Activated CD4-positive, alpha-beta T cell treated with anti-CD3 and anti-CD28 coated beads, Interleukin-2, amount 10 ng/mL, durations not matched to agents 24 days and 14 days (primary cell): ENCODE measurements at regions of chr6 and their contacts with region 1.

Region 1: GRCh38 chr6:141483598-141484061 is 649.1 kb upstream of the GJE1 start:
- DNase-seq: peak; percentile 87
- H3K4me3 Mint-ChIP-seq: peak overlapping the region; percentile 75
- H3K27ac Mint-ChIP-seq: peak overlapping the region; percentile 94
- H3K4me1 Mint-ChIP-seq: peaks cover 35% of the 10 kb centered on the region
- H3K27me3 Mint-ChIP-seq: no peaks in the 10 kb centered on the region

Region 2: DNA sequence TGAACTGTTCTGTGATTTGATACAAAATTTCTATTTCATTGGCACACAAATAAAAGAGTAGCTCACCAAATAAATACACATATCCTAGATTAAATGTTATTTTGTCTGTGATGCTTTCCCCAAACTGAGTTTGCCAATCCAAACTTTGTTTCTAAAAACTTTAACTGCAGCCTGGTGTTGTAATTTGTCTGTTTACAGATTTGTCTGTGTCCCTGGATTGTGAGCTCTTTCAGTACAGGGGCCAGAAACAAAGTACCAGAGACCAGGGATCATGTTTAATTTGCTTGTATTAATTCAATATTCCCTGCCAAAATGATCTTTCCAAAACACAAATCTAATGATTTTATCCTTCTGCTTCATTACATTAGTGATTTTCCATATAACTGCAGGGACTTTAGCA is 395.5 kb before region 1 on chr6:
- intact Hi-C with region 1: no loop called
- DNase-seq: no peak
- H3K4me3 Mint-ChIP-seq: no peak overlapping the region
- H3K27ac Mint-ChIP-seq: no peak overlapping the region
- H3K4me1 Mint-ChIP-seq: no peaks in the 10 kb centered on the region
- H3K27me3 Mint-ChIP-seq: no peaks in the 10 kb centered on the region

Region 3: DNA sequence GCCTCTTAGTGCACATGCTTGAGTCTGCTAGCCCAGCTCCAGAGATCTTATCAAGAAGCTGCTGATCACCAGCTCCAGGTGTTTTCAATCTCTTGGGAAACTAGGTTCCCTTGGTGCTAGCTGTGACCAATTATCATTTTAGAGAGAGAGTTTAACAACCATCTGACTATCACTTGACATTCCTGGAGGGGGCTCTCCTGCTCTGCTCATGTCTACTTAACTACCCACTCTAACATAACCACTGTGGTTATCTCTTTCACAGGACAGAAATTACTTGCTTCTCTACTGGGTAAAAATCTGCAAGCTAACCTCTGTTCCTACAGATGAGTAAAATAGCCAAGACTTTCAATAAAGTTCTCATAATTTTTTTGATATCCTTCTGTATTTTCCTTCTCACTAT is 174.3 kb before region 1 on chr6:
- intact Hi-C with region 1: loop called (anchors 1 kb)
- DNase-seq: no peak
- H3K4me3 Mint-ChIP-seq: no peak overlapping the region
- H3K27ac Mint-ChIP-seq: no peak overlapping the region
- H3K4me1 Mint-ChIP-seq: no peaks in the 10 kb centered on the region
- H3K27me3 Mint-ChIP-seq: no peaks in the 10 kb centered on the region

Region 4: DNA sequence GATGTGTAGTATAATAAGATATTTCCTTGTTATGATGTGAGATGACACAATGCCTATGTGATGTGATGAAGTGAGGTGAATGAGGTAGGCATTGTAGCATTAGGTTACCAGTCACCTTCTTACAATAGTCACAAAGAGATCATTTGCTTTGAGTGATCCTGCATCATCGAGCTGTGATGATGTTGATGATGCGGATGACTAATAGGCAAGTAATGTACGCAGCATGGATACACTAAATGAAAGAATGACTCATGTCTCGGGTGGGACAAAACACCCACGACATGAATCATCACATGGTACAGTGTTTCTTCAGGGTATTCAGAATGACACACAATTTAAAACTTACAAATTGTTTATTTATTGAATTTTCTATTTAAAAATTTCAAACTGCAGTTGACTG is 157.2 kb before region 1 on chr6:
- intact Hi-C with region 1: loop called (anchors 1 kb)
- DNase-seq: peak; percentile 71
- H3K4me3 Mint-ChIP-seq: no peak overlapping the region
- H3K27ac Mint-ChIP-seq: no peak overlapping the region
- H3K4me1 Mint-ChIP-seq: peaks cover 9% of the 10 kb centered on the region
- H3K27me3 Mint-ChIP-seq: peaks cover 1% of the 10 kb centered on the region

Region 5: GRCh38 chr6:141464490-141464889 is 19.1 kb before region 1 on chr6:
- intact Hi-C with region 1: loop called (anchors 1 kb)
- DNase-seq: no peak
- H3K4me3 Mint-ChIP-seq: no peak overlapping the region
- H3K27ac Mint-ChIP-seq: no peak overlapping the region
- H3K4me1 Mint-ChIP-seq: peaks cover 10% of the 10 kb centered on the region
- H3K27me3 Mint-ChIP-seq: no peaks in the 10 kb centered on the region

Region 6: DNA sequence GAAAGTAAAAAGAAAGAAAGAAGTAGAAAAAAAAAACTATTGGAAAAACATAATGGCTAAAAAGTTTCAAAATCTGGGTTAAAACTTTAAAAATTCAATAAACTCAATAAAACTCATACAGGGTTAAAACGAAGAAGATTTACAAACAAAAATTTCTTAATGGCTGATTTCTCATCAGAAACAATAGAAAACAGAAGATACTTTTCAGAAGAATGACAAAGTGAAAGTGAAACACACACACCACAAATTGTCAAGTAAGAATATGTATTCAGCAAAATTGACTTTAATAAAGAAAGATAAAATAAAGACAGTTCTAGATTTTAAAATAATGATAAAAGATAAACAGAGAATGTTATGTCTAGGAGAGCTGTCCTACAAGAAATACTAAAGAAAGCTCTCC is 30.2 kb after region 1 on chr6:
- intact Hi-C with region 1: loop called (anchors 2 kb)
- DNase-seq: no peak
- H3K4me3 Mint-ChIP-seq: peak overlapping the region; percentile 50
- H3K27ac Mint-ChIP-seq: peak overlapping the region; percentile 52
- H3K4me1 Mint-ChIP-seq: peaks cover 7% of the 10 kb centered on the region
- H3K27me3 Mint-ChIP-seq: peaks cover 4% of the 10 kb centered on the region

Region 7: GRCh38 chr6:141562851-141563763 is 79.5 kb after region 1 on chr6:
- intact Hi-C with region 1: loop called (anchors 5 kb)
- DNase-seq: peak; percentile 87
- H3K4me3 Mint-ChIP-seq: peak overlapping the region; percentile 83
- H3K27ac Mint-ChIP-seq: peak overlapping the region; percentile 35
- H3K4me1 Mint-ChIP-seq: peaks cover 19% of the 10 kb centered on the region
- H3K27me3 Mint-ChIP-seq: peaks cover 2% of the 10 kb centered on the region

Region 8: DNA sequence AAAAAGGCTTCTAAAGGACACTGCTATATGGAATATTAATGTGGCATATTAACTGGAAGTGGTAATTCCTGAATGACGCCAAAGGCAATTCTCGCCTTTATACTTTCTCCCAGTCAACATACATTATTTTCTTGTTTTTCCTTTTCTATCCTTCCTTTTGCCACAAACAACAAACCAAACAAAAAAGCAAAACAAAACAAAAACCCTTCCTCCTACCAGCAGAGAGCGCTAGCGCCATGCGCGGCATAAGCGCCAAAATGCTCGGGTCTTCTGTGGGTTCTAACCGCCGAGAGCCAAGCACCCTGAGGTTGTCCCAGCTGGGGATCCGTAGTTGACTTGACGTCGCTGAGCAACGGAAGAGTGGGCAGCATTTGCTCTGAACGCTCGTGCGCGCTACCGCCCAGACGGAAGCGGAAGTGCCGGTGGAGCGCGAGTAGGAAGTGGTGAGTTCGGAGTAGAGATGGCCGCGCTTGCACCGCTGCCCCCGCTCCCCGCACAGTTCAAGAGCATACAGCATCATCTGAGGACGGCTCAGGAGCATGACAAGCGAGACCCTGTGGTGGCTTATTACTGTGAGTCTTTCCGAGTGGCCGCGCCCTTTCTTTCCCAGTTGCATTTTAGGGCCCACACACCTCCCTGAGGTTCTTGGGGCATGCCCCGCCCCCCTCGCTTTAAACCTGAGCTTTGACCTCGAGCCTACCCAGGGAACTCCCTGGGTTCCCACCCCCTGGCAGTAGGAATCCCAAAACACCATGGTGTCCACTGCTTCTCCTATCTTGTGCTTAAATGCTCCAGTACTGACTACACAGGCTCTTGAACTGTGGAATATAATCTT is 663.4 kb after region 1 on chr6 and contains the starts of genes NMBR and VTA1:
- intact Hi-C with region 1: loop called (anchors 10 kb)
- DNase-seq: peak; percentile 99
- H3K4me3 Mint-ChIP-seq: peak within 1 kb of the TSS; percentile 96
- H3K27ac Mint-ChIP-seq: peak within 1 kb of the TSS; percentile 91
- H3K4me1 Mint-ChIP-seq: peaks cover 40% of the 10 kb centered on the region
- H3K27me3 Mint-ChIP-seq: no peaks in the 10 kb centered on the region
- total RNA-seq, gene NMBR: not detected in 2 replicates
- total RNA-seq, gene VTA1: 52.6 and 54.0 TPM in 2 replicates